Activated CD8-positive, alpha-beta T cell treated with anti-CD3 and anti-CD28 coated beads, Interleukin-2, amount 10 ng/mL, durations not matched to agents 7 days and 5 days (primary cell): ENCODE measurements at regions of chrX and their contacts with region 1.

Region 1: GRCh38 chrX:110146521-110146920 is 143.6 kb downstream of the TMEM164 start:
- DNase-seq: peak; percentile 48
- ATAC-seq: peak; percentile 60
- H3K4me3 Mint-ChIP-seq: no peak overlapping the region
- H3K27ac Mint-ChIP-seq: no peak overlapping the region
- H3K4me1 Mint-ChIP-seq: peaks cover 5% of the 10 kb centered on the region
- H3K27me3 Mint-ChIP-seq: no peaks in the 10 kb centered on the region

Region 2: DNA sequence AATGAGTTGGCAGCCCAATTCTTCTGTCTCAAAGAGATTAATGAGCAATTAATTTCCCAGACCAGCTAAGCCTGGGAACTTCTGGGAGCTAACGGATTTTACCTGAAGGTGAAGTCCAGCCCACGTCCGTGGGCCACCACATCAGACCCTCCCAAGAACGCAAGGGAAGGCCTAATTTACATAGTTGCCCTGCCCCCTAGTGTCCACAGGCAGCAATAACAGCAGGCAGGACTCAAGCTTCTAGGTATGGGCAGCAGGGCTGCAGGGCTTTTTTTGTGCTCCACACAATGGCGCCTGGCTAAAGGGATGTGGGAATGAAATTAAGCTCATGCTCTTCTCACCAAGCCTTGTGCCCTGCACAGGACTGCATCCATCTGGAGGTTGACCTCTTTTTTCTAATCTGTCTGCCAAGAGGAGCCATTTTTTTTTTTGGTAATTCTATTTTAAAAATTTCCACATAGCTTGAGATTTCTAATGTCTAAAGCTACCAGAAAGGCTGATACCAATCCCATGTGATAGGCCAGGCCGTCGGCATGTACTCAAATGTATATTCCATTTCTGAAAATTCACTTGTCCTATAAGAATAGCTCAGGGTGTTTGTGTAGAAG is 255.5 kb before region 1 on chrX:
- CTCF ChIA-PET with region 1: interaction called, 25 read pairs
- POLR2A ChIA-PET with region 1: no interaction called
- DNase-seq: peak; percentile 53
- ATAC-seq: peak; percentile 74
- H3K4me3 Mint-ChIP-seq: no peak overlapping the region
- H3K27ac Mint-ChIP-seq: no peak overlapping the region
- H3K4me1 Mint-ChIP-seq: no peaks in the 10 kb centered on the region
- H3K27me3 Mint-ChIP-seq: peaks cover 4% of the 10 kb centered on the region

Region 3: GRCh38 chrX:110407910-110408545 is 261.5 kb after region 1 on chrX:
- CTCF ChIA-PET with region 1: interaction called, 11 read pairs
- POLR2A ChIA-PET with region 1: no interaction called
- DNase-seq: peak; percentile 48
- ATAC-seq: no peak
- H3K4me3 Mint-ChIP-seq: no peak overlapping the region
- H3K27ac Mint-ChIP-seq: no peak overlapping the region
- H3K4me1 Mint-ChIP-seq: no peaks in the 10 kb centered on the region
- H3K27me3 Mint-ChIP-seq: peaks cover 5% of the 10 kb centered on the region

Region 4: DNA sequence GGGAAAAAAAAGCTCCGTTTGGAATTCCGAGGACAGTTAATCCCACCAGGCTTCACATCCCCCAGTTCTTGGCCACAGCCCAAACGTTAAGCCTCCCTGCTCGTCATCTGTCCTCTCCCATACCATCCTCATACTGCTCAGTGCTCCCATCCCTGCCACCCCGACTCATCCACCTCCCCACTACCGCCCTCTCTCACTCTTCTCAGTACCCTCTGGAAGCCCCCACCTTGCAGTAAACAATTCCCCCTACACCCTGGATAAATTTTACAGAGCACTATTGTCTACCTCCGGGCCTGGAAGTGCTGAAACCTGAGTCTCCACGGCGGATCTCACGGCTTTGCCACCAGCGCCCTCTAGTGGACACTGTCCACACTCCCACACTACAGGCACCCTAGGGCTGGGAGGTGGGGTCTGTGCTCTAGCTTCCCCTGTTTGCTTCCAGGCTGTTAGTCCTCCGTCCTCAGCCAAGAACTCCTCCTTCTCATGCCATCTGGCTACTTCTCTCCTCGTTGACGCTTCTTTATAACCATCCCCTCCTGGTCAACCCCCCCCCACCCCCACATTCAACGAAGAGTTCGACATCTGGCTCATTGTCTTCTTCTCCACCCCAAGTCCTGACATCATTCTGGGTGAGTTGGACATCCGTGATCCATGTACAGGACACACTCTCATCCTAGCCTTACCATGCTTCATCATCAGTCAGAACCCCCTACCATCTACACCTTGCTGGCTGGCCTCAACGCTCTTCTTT is 266.6 kb after region 1 on chrX:
- CTCF ChIA-PET with region 1: interaction called, 11 read pairs
- POLR2A ChIA-PET with region 1: no interaction called
- DNase-seq: peak; percentile 71
- ATAC-seq: peak; percentile 96
- H3K4me3 Mint-ChIP-seq: no peak overlapping the region
- H3K27ac Mint-ChIP-seq: no peak overlapping the region
- H3K4me1 Mint-ChIP-seq: no peaks in the 10 kb centered on the region
- H3K27me3 Mint-ChIP-seq: peaks cover 5% of the 10 kb centered on the region

Region 5: DNA sequence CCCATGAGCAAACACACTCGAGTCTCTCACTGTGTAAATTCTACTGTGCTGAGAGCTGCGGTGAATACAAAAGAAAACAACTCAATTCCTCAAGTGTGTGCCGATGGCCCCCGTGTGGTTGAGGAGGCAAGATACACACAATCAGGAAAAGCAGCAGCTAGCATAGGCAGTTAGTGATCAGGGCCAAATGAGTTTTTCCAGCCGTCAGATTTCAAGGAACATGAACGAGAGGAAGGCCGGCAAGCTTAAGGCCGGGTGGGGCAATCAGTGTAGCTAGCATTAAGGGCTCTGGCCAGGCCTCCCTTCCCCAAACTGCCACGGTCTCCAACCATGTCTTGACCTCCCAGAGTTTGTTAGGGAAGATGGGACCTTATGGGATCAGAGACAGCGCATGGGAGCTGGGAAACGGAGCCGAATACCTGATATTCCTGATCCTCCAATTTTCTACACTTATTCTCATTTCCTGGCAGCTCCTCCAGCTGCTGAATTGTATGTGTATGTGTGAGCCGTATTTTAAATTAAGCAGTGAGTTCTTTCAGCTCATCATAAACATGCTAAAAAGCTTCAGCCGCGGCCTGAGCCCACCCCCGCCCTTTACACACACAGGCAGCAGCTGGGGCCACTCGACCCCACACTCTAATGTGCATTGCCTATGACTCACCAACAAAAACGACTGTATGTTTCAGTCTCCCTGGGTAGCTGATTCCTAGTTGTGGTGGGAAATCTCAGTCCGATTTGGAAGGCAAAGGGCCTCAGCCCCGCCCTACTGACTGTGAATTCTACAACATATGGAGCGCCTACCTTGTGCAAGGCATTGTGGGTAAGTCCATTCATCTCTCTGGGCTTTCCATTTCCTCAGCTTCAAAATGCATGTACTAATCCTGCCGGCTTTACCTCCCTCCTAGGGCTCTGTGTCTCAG is 272.1 kb after region 1 on chrX:
- CTCF ChIA-PET with region 1: interaction called, 10 read pairs
- POLR2A ChIA-PET with region 1: no interaction called
- DNase-seq: no peak
- ATAC-seq: no peak
- H3K4me3 Mint-ChIP-seq: no peak overlapping the region
- H3K27ac Mint-ChIP-seq: no peak overlapping the region
- H3K4me1 Mint-ChIP-seq: no peaks in the 10 kb centered on the region
- H3K27me3 Mint-ChIP-seq: no peaks in the 10 kb centered on the region